ENCODE measurements at regions of chr7 and their contacts with region 1.

Region 1: DNA sequence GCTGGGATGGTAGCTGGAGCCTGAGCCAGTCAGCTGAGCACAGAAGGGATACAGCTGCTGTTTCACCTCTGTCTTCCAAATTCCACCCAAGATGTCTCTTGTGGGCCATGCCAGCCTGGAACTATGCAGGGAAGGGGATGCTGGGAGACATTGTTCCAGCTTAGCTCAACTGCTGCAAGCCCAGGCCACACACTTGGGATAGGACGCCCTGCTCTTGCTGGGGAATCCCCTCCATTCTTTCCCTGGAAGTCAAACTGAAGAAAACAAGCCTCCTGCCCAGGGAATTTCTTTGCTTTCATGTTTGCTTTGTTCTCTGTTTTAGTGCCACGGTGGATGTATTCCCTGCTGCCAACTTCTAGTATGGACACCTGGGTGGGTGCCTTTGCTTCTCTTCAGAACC is 55.2 kb upstream of the CDK13 start:
- DNase-seq: no peak
- H3K4me3 ChIP-seq: no peak overlapping the region
- H3K27ac ChIP-seq: no peak overlapping the region
- H3K4me1 ChIP-seq: no peaks in the 10 kb centered on the region
- H3K27me3 ChIP-seq: no peaks in the 10 kb centered on the region
- CTCF ChIP-seq: no peak
- POLR2A ChIP-seq: no peak

Region 2: GRCh38 chr7:40033826-40034225 is 138.9 kb after region 1 on chr7:
- intact Hi-C with region 1: no loop called
- DNase-seq: no peak
- H3K4me3 ChIP-seq: no peak overlapping the region
- H3K27ac ChIP-seq: no peak overlapping the region
- H3K4me1 ChIP-seq: peaks cover 5 to 11% of the 10 kb centered on the region in 2 donors
- H3K27me3 ChIP-seq: no peaks in the 10 kb centered on the region
- CTCF ChIP-seq: no peak
- POLR2A ChIP-seq: no peak

Region 3: DNA sequence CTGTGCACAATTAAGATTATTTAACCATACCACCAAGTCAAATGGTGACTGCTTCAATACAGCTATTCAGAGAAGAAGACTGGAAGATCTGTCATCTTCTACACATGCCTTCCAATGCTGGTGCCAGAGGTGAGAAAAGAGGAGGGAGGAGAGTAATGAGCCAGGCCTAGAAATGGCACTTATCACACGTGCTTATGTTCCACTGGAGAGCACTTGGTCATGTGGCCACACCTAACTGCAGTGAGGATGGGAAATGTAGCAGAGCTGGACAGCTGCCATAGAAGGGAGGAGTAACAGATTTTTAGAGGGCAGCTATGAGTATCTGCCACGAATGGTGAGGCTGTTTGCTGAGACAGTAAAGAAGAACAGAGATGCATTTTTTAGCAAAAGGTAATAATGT is 162.4 kb after region 1 on chr7:
- intact Hi-C with region 1: loop called (anchors 5 kb)
- DNase-seq: peak in 4 of 7 donors; percentile 17 to 46 (median 27)
- H3K4me3 ChIP-seq: no peak overlapping the region
- H3K27ac ChIP-seq: no peak overlapping the region
- H3K4me1 ChIP-seq: peaks cover 0 to 4% of the 10 kb centered on the region in 2 donors
- H3K27me3 ChIP-seq: no peaks in the 10 kb centered on the region
- CTCF ChIP-seq: no peak
- POLR2A ChIP-seq: no peak